ENCODE measurements at regions of chr4 and their contacts with region 1.

Region 1: DNA sequence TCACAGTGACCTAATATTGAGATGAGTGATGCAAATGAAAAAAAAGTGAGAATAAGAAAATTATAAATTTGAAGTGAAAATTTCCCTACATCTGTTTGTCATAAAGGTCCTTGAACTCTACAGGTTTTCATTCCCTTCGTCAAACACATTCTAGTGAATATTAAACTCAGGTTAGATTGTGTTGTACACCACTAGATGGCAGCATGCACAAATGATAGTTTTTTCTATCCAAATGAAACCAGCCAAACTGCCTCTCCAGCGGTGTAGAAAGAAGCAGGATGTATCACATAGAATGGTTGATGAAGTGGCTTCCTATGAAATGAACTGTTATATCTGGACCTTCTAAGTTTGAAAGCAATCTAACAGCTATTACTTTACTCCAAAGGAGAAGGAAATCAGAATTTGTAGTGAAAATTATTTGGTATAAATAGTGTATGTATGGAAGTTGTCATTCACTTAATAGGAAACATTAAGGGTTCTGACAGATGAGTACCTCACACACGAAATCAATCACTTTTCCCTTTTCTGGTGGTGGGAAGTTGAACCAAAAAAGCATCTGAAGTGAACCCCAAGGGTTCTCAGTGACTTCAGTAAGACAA is 382.7 kb downstream of the UNC5C start:
- DNase-seq: peak; percentile 31
- ATAC-seq: peak; percentile 78
- H3K4me3 Mint-ChIP-seq: no peak overlapping the region
- H3K27ac Mint-ChIP-seq: no peak overlapping the region
- H3K4me1 Mint-ChIP-seq: peaks cover 9% of the 10 kb centered on the region
- H3K27me3 Mint-ChIP-seq: no peaks in the 10 kb centered on the region

Region 2: GRCh38 chr4:95505151-95505550 is 339.1 kb after region 1 on chr4:
- CTCF ChIA-PET with region 1: no interaction called
- POLR2A ChIA-PET with region 1: no interaction called
- intact Hi-C with region 1: loop called (anchors 5 kb)
- DNase-seq: no peak
- ATAC-seq: no peak
- H3K4me3 Mint-ChIP-seq: no peak overlapping the region
- H3K27ac Mint-ChIP-seq: no peak overlapping the region
- H3K4me1 Mint-ChIP-seq: peaks cover 6% of the 10 kb centered on the region
- H3K27me3 Mint-ChIP-seq: peaks cover 2% of the 10 kb centered on the region

Region 3: DNA sequence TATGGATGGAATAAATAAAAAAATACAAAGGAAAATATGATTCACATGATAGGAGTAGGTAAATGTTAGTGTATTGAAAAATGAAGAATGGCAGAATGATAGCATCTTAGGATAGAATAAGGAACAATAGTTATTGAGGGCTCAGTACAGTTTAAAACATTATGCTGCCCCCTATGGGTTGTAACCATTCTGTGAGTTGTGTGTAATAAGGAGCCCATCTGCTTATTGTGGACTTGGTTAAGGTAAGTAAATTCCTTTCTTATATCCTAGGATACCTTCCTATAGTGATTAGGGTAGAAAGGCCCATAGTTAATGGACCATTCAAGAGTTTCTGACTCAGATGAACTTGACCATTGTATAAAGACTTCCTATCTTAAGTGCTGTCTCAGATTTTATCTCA is 869.7 kb after region 1 on chr4:
- CTCF ChIA-PET with region 1: no interaction called
- POLR2A ChIA-PET with region 1: no interaction called
- intact Hi-C with region 1: loop called (anchors 2 to 10 kb)
- DNase-seq: no peak
- ATAC-seq: no peak
- H3K4me3 Mint-ChIP-seq: no peak overlapping the region
- H3K27ac Mint-ChIP-seq: no peak overlapping the region
- H3K4me1 Mint-ChIP-seq: no peaks in the 10 kb centered on the region
- H3K27me3 Mint-ChIP-seq: no peaks in the 10 kb centered on the region

Region 4: DNA sequence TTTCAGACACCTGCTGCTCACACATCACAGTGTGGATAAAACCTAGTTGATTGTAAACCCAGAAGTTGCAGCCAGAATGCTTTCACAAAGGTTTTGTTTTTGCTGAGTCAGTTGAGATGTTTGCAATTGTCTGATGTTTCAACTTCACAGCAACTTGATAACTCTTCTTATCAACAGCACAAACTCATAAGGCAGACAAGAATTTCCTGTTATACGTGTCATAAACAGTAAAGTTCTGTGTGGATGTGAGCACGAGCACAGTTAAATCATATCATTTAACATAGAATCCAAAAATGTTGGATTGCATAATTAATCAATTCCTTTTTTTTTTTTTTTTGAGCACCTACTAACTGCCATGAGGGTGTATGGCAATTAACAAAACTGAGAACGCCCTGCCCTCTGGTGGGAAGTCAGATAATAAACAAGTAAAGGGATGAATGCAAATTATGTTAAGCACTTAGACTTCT is 1186.1 kb after region 1 on chr4:
- CTCF ChIA-PET with region 1: no interaction called
- POLR2A ChIA-PET with region 1: no interaction called
- intact Hi-C with region 1: loop called in 1 of 2 experiments (anchors 2 kb)
- DNase-seq: peak; percentile 43
- ATAC-seq: no peak
- H3K4me3 Mint-ChIP-seq: no peak overlapping the region
- H3K27ac Mint-ChIP-seq: no peak overlapping the region
- H3K4me1 Mint-ChIP-seq: no peaks in the 10 kb centered on the region
- H3K27me3 Mint-ChIP-seq: no peaks in the 10 kb centered on the region

Region 5: DNA sequence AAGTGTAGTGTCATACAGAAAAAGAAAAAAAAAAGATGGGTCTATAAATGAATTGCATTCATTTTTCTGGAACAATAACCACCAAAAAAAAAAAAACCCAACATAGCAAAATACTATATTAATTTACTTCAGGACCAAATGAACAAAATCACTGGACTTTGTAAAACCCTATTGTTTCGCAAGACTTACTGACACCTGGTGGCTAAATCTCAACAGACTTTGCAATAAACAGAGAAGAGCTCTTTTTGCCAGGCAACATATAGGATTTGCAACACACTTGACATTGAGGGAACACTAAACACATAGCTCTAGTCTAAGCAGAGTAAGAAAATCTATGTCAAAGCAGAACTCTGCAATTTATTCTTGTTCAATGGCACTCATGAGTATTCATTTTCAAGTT is 1987.0 kb after region 1 on chr4:
- CTCF ChIA-PET with region 1: no interaction called
- POLR2A ChIA-PET with region 1: no interaction called
- intact Hi-C with region 1: loop called in 1 of 2 experiments (anchors 2 kb)
- DNase-seq: no peak
- ATAC-seq: no peak
- H3K4me3 Mint-ChIP-seq: no peak overlapping the region
- H3K27ac Mint-ChIP-seq: no peak overlapping the region
- H3K4me1 Mint-ChIP-seq: no peaks in the 10 kb centered on the region
- H3K27me3 Mint-ChIP-seq: no peaks in the 10 kb centered on the region

Measured in activated CD4-positive, alpha-beta T cell treated with anti-CD3 and anti-CD28 coated beads for 36 hours (primary cell).